Mammary epithelial cell (primary cell): ENCODE measurements at regions of chr11 and their contacts with region 1.

Region 1: GRCh38 chr11:46616998-46617675 is at the starts of genes ATG13 and HARBI1:
- DNase-seq: peak; percentile 90
- H3K4me3 ChIP-seq: peak within 1 kb of the TSS; percentile 83 to 100 (median 94)
- H3K27ac ChIP-seq: peak within 1 kb of the TSS; percentile 99
- H3K4me1 ChIP-seq: peaks cover 11% of the 10 kb centered on the region
- H3K27me3 ChIP-seq: no peaks in the 10 kb centered on the region
- CTCF ChIP-seq: no peak
- total RNA-seq, gene ATG13: 52.8 to 58.9 TPM
- total RNA-seq, gene HARBI1: 5.8 to 6.8 TPM

Region 2: DNA sequence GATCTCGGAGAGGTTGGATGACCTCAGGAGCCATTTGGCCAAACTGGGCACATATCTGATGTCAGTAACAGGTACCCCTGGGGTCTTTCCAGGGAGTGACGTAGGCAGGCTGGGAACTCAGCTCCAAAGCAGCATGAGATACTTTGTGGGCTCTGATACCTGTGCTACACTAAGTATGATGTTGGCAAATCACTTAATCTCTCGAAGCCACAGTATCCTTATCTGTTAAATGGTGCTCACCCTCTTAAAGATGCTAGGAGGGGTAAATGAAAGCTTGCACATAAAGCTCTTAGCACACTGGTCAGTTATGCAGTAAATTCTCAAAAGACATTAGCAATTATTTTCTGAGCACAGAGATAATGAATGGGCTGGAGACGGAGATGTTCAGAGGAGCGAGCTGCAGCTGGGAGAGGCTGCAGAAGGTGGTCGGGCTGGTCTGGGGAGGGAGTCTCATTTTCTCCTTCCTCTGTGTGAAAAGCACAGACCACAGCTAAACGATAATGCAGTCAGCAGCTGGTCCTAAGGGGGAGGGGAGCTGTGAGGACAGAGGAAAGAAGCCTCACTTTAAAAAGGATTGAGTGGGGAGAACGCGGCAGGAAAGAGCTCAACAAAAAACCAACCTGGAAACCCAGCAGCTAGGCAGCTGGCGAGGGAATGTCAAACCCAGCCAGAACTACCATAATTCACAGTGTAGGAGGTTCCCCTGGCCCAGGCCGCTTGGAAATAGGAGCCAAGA is 286.8 kb before region 1 on chr11:
- CTCF ChIA-PET with region 1: interaction called, 15 read pairs
- dilution Hi-C with region 1: no loop called
- in situ Hi-C with region 1: no loop called
- intact Hi-C with region 1: no loop called
- DNase-seq: no peak
- H3K4me3 ChIP-seq: no peak overlapping the region
- H3K27ac ChIP-seq: no peak overlapping the region
- H3K4me1 ChIP-seq: peaks cover 10% of the 10 kb centered on the region
- H3K27me3 ChIP-seq: peaks cover 26% of the 10 kb centered on the region
- CTCF ChIP-seq: no peak

Region 3: DNA sequence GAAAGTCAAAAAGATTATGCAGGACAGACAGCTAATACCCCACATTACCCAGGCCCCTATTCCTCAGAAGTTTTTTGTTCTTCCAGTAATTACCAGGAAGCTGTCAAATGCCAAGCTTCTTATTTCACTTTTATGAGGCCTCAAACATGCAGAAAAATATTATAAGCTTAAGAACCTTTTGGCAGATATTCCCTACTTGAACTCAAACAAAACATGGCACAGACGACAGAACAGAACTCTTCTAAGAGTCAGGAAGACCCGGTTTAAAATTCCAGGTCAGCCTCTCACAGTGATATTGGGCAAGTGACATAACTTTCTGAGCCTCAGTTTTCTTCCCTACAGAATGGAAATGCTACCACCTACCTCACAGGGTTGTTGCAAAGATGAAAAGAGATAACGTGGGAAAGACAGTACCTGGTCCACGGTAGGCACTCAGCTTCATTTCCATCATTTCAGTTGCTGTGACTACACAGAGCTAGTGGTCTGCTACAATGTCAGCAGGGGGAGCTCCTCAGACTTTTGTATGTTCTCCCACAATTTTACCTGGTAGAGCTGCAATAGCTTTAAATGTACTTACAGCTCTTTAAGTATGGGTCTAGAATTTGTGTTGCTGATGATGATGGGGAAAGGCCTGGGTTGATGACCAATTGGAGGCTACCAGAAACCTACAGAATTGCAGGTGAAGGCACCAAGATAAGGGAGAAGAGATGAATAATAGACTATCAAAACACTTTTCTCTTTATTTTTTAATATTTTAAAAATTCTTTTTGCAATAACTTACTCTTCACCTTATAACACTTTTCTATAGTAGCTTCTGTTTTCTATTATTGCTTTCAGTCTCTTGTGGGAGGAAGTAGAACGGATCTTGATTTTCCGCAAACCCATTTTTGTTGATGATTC is 127.2 kb before region 1 on chr11:
- CTCF ChIA-PET with region 1: interaction called, 16 read pairs
- dilution Hi-C with region 1: no loop called
- in situ Hi-C with region 1: no loop called
- intact Hi-C with region 1: loop called (anchors 1 kb)
- DNase-seq: peak; percentile 32
- H3K4me3 ChIP-seq: no peak overlapping the region
- H3K27ac ChIP-seq: no peak overlapping the region
- H3K4me1 ChIP-seq: no peaks in the 10 kb centered on the region
- H3K27me3 ChIP-seq: no peaks in the 10 kb centered on the region
- CTCF ChIP-seq: peak; percentile 61 to 62

Region 4: DNA sequence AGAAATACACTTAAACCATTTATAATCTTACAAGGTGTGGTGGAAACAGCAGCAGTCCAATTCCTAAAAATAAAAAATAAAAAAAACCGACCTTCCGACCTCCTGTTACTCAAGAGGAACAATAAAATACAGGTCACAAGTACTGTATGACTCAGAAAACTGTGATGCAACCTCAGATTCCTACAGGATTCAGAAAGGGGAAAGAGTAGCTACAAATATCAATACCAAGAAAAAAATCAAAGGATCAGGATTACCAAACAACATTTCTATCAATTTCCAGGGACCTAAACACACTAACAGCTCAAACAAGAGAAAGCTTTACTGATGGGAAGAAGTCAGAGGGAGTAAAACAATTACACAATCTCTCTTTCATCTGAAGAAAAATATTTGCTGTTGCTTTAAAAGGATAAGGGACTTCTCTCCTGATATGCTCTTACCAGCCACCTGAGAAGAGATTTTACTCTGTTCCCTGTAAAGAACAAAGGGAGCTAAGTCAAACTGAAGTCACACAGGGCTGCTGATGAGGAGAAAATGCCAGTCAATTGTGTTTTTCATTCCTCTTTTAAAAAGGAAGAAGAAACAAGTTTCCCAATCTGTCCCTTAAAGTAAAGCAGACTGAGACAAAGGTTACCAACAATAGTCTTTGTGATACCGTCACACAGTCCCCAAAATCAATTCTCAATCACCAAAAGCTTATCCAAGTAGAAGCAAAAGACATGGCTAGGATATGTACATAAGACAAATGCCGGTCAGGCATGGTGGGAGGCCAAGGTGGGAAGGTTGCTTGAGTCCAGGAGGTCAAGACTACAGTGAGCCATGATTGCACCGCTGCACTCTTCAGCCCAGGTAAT is 62.7 kb before region 1 on chr11:
- CTCF ChIA-PET with region 1: no interaction called
- dilution Hi-C with region 1: no loop called
- in situ Hi-C with region 1: no loop called
- intact Hi-C with region 1: loop called (anchors 1 kb)
- DNase-seq: peak; percentile 84
- H3K4me3 ChIP-seq: peak overlapping the region in 1 of 3 experiments; percentile 3
- H3K27ac ChIP-seq: peak overlapping the region; percentile 57
- H3K4me1 ChIP-seq: peaks cover 31% of the 10 kb centered on the region
- H3K27me3 ChIP-seq: no peaks in the 10 kb centered on the region
- CTCF ChIP-seq: no peak

Region 5: GRCh38 chr11:46659908-46660307 is 42.8 kb after region 1 on chr11:
- CTCF ChIA-PET with region 1: no interaction called
- dilution Hi-C with region 1: loop called (anchors 5 kb)
- in situ Hi-C with region 1: no loop called
- intact Hi-C with region 1: no loop called
- DNase-seq: no peak
- H3K4me3 ChIP-seq: no peak overlapping the region
- H3K27ac ChIP-seq: no peak overlapping the region
- H3K4me1 ChIP-seq: peaks cover 10% of the 10 kb centered on the region
- H3K27me3 ChIP-seq: no peaks in the 10 kb centered on the region
- CTCF ChIP-seq: no peak

Region 6: GRCh38 chr11:46800177-46800576 is 183.0 kb after region 1 on chr11:
- CTCF ChIA-PET with region 1: no interaction called
- dilution Hi-C with region 1: no loop called
- in situ Hi-C with region 1: no loop called
- intact Hi-C with region 1: no loop called
- DNase-seq: no peak
- H3K4me3 ChIP-seq: no peak overlapping the region
- H3K27ac ChIP-seq: no peak overlapping the region
- H3K4me1 ChIP-seq: no peaks in the 10 kb centered on the region
- H3K27me3 ChIP-seq: no peaks in the 10 kb centered on the region
- CTCF ChIP-seq: no peak